ENCODE measurements at regions of chr21 and their contacts with region 1.

Region 1: GRCh38 chr21:29258626-29259335 is 39.9 kb upstream of the BACH1 start:
- DNase-seq: peak; percentile 37 to 68
- H3K4me3 ChIP-seq: 0 out of 2 replicates have a peak overlapping the region, but pooled peaks have one; percentile 22
- H3K27ac ChIP-seq: peak overlapping the region; percentile 80
- H3K4me1 ChIP-seq: peaks cover 35% of the 10 kb centered on the region
- H3K27me3 ChIP-seq: no peaks in the 10 kb centered on the region
- CTCF ChIP-seq: no peak

Region 2: DNA sequence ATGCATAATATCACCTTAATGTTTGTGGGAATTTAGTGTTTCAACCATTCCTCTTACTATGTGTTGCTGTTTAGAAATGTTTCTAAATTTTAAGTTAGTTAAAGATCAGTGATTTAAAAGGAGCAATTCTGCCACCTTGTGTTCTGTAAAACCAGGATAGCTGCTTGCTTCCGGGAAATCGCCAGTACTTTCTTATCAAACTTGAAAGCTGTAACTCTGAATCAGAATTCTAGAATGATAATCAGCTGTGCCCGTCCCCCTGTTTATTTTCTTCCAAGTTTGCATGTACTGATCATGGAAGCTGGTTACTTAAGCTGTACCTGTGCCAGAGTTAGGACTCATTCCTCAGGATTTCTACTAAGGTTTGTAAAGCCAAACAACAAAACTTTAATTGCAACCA is 922.5 kb before region 1 on chr21:
- CTCF ChIA-PET with region 1: no interaction called
- POLR2A ChIA-PET with region 1: no interaction called
- intact Hi-C with region 1: no loop called
- DNase-seq: peak in 1 of 2 experiments; percentile 4
- H3K4me3 ChIP-seq: no peak overlapping the region
- H3K27ac ChIP-seq: no peak overlapping the region
- H3K4me1 ChIP-seq: no peaks in the 10 kb centered on the region
- H3K27me3 ChIP-seq: no peaks in the 10 kb centered on the region
- CTCF ChIP-seq: peak; percentile 43; the same call in 1 of the 2 replicates

Region 3: DNA sequence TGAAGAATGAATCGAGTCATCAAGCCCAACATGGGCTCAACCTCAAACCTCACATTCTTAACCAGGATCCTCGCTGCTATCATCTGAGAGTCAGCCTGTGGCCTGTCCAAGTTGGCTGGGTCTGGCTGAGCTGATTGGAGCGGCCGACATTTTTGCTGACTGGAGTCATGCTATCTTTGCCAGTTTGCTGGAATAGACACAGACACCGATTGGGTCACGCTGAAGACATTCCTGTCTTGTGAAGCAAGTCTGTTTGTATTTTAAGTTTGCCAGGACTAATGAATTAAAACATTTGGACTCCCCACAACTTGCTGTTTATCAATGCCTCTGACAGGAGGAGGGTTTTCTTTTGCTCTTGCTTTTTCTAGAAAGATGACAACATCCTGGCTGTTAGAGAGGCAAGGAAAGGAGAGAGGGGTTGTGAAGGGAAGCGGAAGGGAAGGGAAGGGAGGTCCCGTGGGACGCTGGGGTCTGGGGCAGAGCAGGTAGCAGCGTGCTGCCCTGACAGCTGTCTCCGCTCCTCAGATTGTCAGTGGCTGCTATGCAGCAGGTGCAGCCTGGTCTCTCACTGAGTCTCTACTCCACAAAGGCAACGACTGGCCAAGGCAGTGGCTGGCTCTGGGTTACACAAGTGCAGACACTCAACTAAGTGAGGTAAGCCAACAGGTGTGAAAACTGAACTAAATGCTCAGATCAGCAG is 128.4 kb before region 1 on chr21 and contains the start of gene MAP3K7CL:
- CTCF ChIA-PET with region 1: no interaction called
- POLR2A ChIA-PET with region 1: interaction called, 11 read pairs
- intact Hi-C with region 1: no loop called
- DNase-seq: peak in 1 of 2 experiments; percentile 35
- H3K4me3 ChIP-seq: no peak within 1 kb of the TSS
- H3K27ac ChIP-seq: no peak within 1 kb of the TSS
- H3K4me1 ChIP-seq: no peaks in the 10 kb centered on the region
- H3K27me3 ChIP-seq: no peaks in the 10 kb centered on the region
- CTCF ChIP-seq: no peak
- total RNA-seq, gene MAP3K7CL: 0.37 and 0.50 TPM in 2 replicates

Region 4: DNA sequence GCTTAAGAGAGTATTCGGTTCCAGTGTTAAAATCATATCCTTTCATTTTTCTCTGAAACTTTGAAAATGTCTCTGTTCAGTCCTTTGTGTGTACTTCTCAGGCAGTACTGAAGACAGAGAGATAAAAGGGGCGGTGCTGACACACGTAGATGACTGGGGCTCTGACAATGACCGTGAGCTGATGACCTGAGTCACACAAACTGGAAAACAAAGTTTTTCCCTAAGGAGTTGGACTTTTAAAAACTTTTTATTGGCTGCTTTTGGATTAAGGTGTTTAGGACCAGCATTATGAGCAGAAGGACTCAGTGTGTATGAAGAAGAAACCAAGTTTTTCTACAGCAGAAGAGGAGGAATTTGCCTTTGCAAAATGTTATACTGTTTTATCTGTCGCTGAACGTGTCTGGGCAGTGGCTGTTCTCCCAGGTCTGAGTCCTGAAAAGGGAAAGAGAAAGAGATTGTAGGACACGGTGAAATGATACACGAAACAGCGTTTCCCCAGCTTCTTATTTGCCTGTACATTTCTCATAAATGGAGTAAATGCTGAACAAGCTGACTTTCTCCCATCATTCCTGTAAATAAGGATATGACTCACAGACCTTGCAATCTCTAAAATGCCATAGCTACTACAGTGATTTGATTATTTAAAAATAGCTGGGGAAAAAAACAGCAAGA is 76.8 kb before region 1 on chr21:
- CTCF ChIA-PET with region 1: no interaction called
- POLR2A ChIA-PET with region 1: interaction called, 3 read pairs
- intact Hi-C with region 1: loop called (anchors 5 kb)
- DNase-seq: peak in 1 of 2 experiments; percentile 88
- H3K4me3 ChIP-seq: peak overlapping the region; percentile 42; the same call in 1 of the 2 replicates
- H3K27ac ChIP-seq: peak overlapping the region; percentile 99
- H3K4me1 ChIP-seq: peaks cover 71% of the 10 kb centered on the region
- H3K27me3 ChIP-seq: no peaks in the 10 kb centered on the region
- CTCF ChIP-seq: no peak

Measured in PC-9 (cell line).